CD8-positive, alpha-beta memory T cell (primary cell): ENCODE measurements at regions of chr1 and their contacts with region 1.

Region 1: DNA sequence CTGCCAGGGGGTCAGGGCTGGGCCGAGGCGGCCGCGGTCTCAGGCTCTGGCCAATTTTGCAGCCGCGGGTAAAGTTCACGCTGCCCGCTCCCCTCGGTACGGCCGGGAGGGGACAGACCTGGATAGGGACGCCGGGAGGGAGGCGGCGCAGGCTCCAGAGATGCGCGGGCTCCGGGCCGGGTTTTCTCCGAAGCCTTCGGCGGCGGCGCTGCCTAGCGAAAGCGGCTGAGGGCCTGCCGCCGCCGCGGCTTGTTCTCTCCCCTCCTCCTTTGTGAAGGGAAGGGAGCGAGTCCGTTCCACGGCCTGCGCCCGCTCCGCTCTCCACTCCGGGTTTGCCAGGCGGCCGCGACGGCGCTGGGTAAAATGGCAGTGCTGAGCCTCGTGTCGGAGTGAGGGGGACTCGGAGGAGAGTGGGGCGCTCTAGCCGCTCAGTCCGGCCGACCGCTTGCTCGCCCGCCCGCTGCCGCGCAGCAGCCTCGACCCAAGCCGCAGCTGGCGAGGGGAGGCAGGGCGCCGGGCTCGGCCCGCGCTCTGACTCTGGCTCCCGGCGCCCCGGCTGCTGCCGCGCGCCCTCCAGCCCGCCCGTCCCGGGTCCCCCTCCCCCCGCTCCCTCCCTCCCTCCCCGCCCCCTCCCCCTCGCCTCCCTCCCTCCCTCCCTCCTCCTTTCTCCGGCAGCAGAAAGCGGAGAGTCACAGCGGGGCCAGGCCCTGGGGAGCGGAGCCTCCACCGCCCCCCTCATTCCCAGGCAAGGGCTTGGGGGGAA is at the start of gene ARID1A:
- DNase-seq: peak; percentile 93 to 99 (median 96)
- H3K4me3 ChIP-seq: peak within 1 kb of the TSS; percentile 83
- H3K4me3 Mint-ChIP-seq: peak within 1 kb of the TSS; percentile 90 to 97 (median 94)
- H3K27ac ChIP-seq: peak within 1 kb of the TSS; percentile 86
- H3K27ac Mint-ChIP-seq: peak within 1 kb of the TSS; percentile 85 to 96 (median 94)
- H3K4me1 ChIP-seq: peaks cover 46% of the 10 kb centered on the region
- H3K4me1 Mint-ChIP-seq: peaks cover 28 to 38% (median 30%) of the 10 kb centered on the region in 3 donors
- H3K27me3 ChIP-seq: no peaks in the 10 kb centered on the region
- H3K27me3 Mint-ChIP-seq: no peaks in the 10 kb centered on the region
- total RNA-seq, gene ARID1A: 88.4 to 90.9 TPM

Region 2: GRCh38 chr1:26666855-26667254 is 28.7 kb before region 1 on chr1:
- CTCF ChIA-PET with region 1: no interaction called
- POLR2A ChIA-PET with region 1: no interaction called
- DNase-seq: no peak
- H3K4me3 ChIP-seq: no peak overlapping the region
- H3K4me3 Mint-ChIP-seq: no peak overlapping the region
- H3K27ac ChIP-seq: no peak overlapping the region
- H3K27ac Mint-ChIP-seq: no peak overlapping the region
- H3K4me1 ChIP-seq: no peaks in the 10 kb centered on the region
- H3K4me1 Mint-ChIP-seq: no peaks in the 10 kb centered on the region
- H3K27me3 ChIP-seq: no peaks in the 10 kb centered on the region
- H3K27me3 Mint-ChIP-seq: peaks cover 3 to 4% of the 10 kb centered on the region in 2 donors

Region 3: DNA sequence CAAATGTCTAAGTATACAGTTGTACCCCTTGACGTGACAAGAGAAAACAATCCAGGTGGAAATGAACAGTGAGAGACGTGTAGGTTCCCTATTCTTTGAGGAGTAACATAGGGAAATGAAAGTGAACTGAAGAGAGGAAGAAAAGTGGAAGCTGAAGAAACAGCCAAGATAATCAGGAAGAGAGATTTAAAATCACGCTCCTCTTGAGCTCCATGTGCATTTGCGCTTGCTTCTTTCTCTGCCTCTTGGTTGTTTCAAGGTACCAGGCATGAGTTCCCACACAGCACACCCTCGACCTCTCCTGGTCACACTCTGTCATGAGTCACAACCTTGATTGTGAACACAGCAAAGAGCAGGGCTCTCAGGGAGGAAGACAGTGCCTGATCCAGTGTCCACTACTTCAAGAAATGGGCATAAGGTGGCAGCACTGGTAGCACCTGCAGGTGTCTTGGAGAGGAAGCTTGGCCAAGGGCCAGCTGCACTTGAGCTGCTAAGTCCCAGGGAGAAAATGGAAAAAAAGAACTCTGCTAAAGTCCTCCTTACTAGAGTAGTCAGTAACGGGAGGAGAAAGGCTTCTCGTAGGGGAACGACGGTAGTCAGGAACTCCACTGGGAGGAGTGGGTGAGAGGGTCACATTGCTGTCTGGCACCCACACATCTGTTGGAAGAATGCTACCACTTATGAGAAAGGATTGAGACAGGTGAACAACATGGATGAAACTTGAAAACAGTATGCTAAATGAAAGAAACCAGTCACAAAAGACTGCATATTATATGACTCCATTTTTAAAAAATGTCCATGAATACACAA is 18.0 kb before region 1 on chr1:
- CTCF ChIA-PET with region 1: interaction called, 50 read pairs
- POLR2A ChIA-PET with region 1: interaction called, 11 read pairs
- DNase-seq: peak; percentile 14 to 67 (median 40)
- H3K4me3 ChIP-seq: no peak overlapping the region
- H3K4me3 Mint-ChIP-seq: peak overlapping the region in 4 of 7 donors; percentile 29 to 64 (median 52)
- H3K27ac ChIP-seq: no peak overlapping the region
- H3K27ac Mint-ChIP-seq: peak overlapping the region in 7 of 8 donors; percentile 18 to 86 (median 43)
- H3K4me1 ChIP-seq: peaks cover 14% of the 10 kb centered on the region
- H3K4me1 Mint-ChIP-seq: peaks cover 12 to 22% (median 17%) of the 10 kb centered on the region in 3 donors
- H3K27me3 ChIP-seq: no peaks in the 10 kb centered on the region
- H3K27me3 Mint-ChIP-seq: no peaks in the 10 kb centered on the region

Region 4: GRCh38 chr1:26723013-26723991 is 27.8 kb after region 1 on chr1:
- CTCF ChIA-PET with region 1: interaction called, 14 read pairs
- POLR2A ChIA-PET with region 1: interaction called, 6 read pairs
- DNase-seq: peak; percentile 32 to 56 (median 44)
- H3K4me3 ChIP-seq: peak overlapping the region; percentile 42
- H3K4me3 Mint-ChIP-seq: peak overlapping the region; percentile 5 to 84 (median 73)
- H3K27ac ChIP-seq: no peak overlapping the region
- H3K27ac Mint-ChIP-seq: peak overlapping the region; percentile 38 to 94 (median 68)
- H3K4me1 ChIP-seq: peaks cover 91% of the 10 kb centered on the region
- H3K4me1 Mint-ChIP-seq: peaks cover 84 to 93% (median 89%) of the 10 kb centered on the region in 3 donors
- H3K27me3 ChIP-seq: no peaks in the 10 kb centered on the region
- H3K27me3 Mint-ChIP-seq: no peaks in the 10 kb centered on the region

Region 5: DNA sequence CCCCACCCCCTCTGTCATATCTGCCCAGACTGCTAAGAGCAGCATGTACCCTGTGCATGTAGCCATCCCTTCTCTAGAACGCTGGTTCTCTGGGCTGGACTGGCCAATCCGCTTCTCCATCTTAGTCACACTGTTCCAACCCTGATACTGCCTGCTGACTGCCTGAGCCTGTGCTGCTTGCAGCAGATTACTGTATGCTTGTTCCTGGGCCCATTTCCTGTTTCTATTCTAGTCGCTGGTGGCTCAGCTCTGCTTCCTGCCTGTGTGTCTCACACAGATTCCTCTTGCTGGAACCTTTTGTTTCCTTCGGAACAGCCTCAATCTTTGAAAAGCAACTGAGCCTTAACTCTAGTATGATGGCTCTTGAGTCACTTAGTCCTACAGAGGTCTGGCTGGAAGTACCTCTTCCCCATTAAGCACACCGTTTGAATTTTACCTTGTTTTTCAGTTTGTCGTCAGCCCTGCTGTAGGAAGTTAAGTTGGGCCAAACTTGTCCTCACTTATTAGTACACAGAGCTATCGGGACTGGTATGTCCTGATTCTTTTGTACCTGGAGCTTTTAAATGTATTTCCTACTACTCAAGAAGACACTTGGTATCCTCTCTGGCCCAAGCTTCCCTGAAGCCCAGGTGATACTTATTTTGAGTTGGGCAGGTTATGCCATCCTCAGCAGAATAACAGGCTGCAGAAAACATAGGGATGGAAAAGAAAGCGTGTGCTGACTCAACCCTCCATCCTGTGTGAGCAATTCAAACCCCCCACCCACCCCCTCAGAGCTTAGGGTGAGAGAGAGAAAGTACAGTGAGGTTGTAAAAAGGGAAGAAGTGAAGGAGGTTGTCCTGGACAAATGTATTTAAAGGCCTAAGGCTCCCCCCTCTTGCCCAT is 48.8 kb after region 1 on chr1:
- CTCF ChIA-PET with region 1: interaction called, 8 read pairs
- POLR2A ChIA-PET with region 1: interaction called, 23 read pairs
- DNase-seq: peak; percentile 56 to 87 (median 81)
- H3K4me3 ChIP-seq: peak overlapping the region; percentile 37
- H3K4me3 Mint-ChIP-seq: peak overlapping the region; percentile 8 to 84 (median 59)
- H3K27ac ChIP-seq: peak overlapping the region; percentile 41
- H3K27ac Mint-ChIP-seq: peak overlapping the region; percentile 73 to 98 (median 92)
- H3K4me1 ChIP-seq: peaks cover 86% of the 10 kb centered on the region
- H3K4me1 Mint-ChIP-seq: peaks cover 79 to 93% (median 87%) of the 10 kb centered on the region in 3 donors
- H3K27me3 ChIP-seq: no peaks in the 10 kb centered on the region
- H3K27me3 Mint-ChIP-seq: peaks cover 0 to 2% of the 10 kb centered on the region in 2 donors

Region 6: DNA sequence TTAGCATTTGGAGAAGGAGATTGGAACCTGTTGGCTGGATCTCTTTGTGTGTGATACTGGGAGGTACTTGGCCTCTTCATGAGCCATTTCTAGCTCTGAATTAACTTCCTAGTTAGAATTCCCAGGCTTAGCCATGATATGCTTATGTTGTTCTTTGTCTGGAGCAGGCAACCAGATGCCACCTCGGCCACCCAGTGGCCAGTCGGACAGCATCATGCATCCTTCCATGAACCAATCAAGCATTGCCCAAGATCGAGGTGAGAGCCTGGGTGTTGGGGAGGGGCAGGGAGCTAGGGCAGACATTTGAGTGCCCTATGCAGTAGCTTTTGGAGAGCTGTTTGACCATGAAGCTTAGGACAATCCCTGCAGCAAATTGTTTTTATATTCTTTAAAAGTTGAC is 65.7 kb after region 1 on chr1:
- CTCF ChIA-PET with region 1: no interaction called
- POLR2A ChIA-PET with region 1: no interaction called
- DNase-seq: no peak
- H3K4me3 ChIP-seq: no peak overlapping the region
- H3K4me3 Mint-ChIP-seq: peak overlapping the region in 1 of 7 donors; percentile 20
- H3K27ac ChIP-seq: no peak overlapping the region
- H3K27ac Mint-ChIP-seq: peak overlapping the region in 5 of 8 donors; percentile 19 to 64 (median 51)
- H3K4me1 ChIP-seq: peaks cover 3% of the 10 kb centered on the region
- H3K4me1 Mint-ChIP-seq: peaks cover 24 to 43% (median 30%) of the 10 kb centered on the region in 3 donors
- H3K27me3 ChIP-seq: no peaks in the 10 kb centered on the region
- H3K27me3 Mint-ChIP-seq: no peaks in the 10 kb centered on the region